ENCODE measurements at regions of chr18 and their contacts with region 1.

Region 1: GRCh38 chr18:61581578-61582201 is 248.5 kb downstream of the CDH20 start:
- DNase-seq: peak in 1 of 2 donors; percentile 83
- H3K4me3 ChIP-seq: peak overlapping the region; percentile 45 to 62
- H3K27ac ChIP-seq: peak overlapping the region in 1 of 2 donors; percentile 50
- H3K4me1 ChIP-seq: no peaks in the 10 kb centered on the region
- H3K27me3 ChIP-seq: no peaks in the 10 kb centered on the region
- CTCF ChIP-seq: peak; percentile 82 to 99 (median 99)

Region 2: DNA sequence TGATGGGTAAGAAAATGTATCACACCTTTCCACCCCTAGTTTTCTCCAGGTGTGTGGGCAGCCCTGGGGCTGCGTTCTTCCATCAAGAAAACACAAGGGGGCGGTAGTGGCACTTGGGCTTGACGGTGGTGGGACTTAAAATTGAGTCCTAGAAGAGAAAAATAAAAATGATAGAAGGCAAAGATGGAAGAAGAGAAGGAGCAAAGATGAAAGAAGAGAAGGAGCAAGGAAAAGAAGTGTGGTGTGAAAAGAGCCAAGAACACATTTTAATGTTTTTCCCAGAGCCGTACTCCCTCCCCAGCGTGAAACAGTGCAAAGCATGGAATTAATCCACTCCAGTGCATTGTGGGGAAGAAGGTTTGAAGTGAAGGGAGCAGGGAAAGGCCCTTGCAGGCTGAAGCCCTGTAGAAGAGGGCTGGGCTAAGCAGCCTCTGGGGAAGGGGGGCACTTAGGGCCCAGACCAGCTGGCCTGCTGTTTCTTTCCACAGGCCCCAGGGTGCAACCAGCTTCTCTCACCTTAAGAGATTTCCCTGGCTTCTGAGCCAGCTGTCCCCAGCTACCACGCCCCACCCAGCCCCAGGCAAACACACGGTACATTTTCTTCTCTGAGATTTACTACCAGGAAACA is 54.3 kb after region 1 on chr18:
- intact Hi-C with region 1: loop called (anchors 2 kb)
- DNase-seq: peak in 1 of 2 donors; percentile 72
- H3K4me3 ChIP-seq: no peak overlapping the region
- H3K27ac ChIP-seq: no peak overlapping the region
- H3K4me1 ChIP-seq: peaks cover 0 to 6% of the 10 kb centered on the region in 2 donors
- H3K27me3 ChIP-seq: no peaks in the 10 kb centered on the region
- CTCF ChIP-seq: peak; percentile 60 to 93 (median 84)

Region 3: GRCh38 chr18:62131301-62131909 is 549.7 kb after region 1 on chr18:
- intact Hi-C with region 1: loop called (anchors 1 kb)
- DNase-seq: peak in 1 of 2 donors; percentile 65
- H3K4me3 ChIP-seq: no peak overlapping the region
- H3K27ac ChIP-seq: no peak overlapping the region
- H3K4me1 ChIP-seq: peaks cover 0 to 3% of the 10 kb centered on the region in 2 donors
- H3K27me3 ChIP-seq: no peaks in the 10 kb centered on the region
- CTCF ChIP-seq: peak; percentile 79 to 90 (median 89)

Region 4: GRCh38 chr18:62437235-62438017 is 855.7 kb after region 1 on chr18:
- intact Hi-C with region 1: loop called (anchors 5 kb)
- DNase-seq: peak; percentile 86 to 98
- H3K4me3 ChIP-seq: peak overlapping the region; percentile 39 to 52
- H3K27ac ChIP-seq: peak overlapping the region; percentile 85 to 94
- H3K4me1 ChIP-seq: peaks cover 4 to 19% of the 10 kb centered on the region in 2 donors
- H3K27me3 ChIP-seq: no peaks in the 10 kb centered on the region
- CTCF ChIP-seq: no peak